AG04450 (cell line): ENCODE measurements at regions of chr16 and their contacts with region 1.

Region 1: DNA sequence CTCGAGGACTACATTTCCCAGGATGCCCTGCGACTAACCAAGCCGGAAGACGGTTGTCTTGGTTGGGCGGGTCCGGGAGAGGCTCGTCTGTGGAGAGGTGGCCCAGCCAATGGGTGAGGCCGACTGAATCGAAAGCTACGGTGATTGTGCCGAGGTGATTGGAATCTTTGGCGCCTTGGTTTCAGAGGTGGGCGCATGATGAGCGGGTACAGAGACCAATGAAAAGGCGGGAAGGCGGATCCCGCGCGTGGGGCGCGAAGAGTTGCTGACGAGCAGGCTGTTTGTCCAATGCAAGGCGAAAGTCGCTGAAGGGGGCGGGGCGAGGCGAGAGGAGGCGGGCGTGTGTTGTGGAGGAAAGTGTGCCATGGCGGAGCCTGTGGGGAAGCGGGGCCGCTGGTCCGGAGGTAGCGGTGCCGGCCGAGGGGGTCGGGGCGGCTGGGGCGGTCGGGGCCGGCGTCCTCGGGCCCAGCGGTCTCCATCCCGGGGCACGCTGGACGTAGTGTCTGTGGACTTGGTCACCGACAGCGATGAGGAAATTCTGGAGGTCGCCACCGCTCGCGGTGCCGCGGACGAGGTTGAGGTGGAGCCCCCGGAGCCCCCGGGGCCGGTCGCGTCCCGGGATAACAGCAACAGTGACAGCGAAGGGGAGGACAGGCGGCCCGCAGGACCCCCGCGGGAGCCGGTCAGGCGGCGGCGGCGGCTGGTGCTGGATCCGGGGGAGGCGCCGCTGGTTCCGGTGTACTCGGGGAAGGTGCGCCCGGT is at the start of gene NFATC2IP:
- DNase-seq: peak; percentile 99
- H3K4me3 ChIP-seq: peak within 1 kb of the TSS; percentile 78
- H3K27ac ChIP-seq: peak within 1 kb of the TSS; percentile 21
- H3K27me3 ChIP-seq: no peaks in the 10 kb centered on the region
- CTCF ChIP-seq: no peak
- polyA plus RNA-seq, gene NFATC2IP: 20.7 and 22.3 TPM in 2 replicates

Region 2: DNA sequence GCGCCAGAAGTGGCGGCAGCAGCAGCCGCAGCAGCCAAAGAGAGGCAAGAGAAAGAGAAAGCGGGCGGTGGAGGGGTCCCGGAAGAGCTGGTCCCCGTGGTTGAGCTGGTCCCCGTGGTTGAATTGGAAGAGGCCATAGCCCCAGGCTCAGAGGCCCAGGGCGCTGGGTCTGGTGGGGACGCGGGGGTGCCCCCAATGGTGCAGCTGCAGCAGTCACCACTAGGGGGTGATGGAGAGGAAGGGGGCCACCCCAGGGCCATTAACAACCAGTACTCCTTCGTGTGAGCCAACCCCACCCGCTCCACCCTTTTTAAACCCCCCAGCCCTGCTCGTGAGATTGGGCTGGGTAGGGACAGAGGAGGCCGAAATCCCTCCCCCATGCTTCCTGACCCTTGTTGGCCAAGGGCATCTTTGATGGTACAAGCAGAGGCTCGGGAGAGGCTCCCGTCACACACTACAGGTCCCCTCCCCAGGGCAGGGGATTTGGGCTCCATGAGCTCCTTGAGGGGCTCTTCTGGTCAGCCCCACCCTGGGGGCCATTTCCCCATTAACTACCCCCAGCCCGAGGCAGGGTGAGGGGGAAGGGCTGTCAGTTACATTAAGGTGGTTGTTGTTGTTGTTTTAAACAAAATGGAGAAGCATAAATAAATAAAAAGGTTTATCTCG is 77.2 kb before region 1 on chr16:
- CTCF ChIA-PET with region 1: interaction called, 19 read pairs
- POLR2A ChIA-PET with region 1: no interaction called
- DNase-seq: no peak
- H3K4me3 ChIP-seq: no peak overlapping the region
- H3K27ac ChIP-seq: no peak overlapping the region
- H3K27me3 ChIP-seq: no peaks in the 10 kb centered on the region
- CTCF ChIP-seq: peak; percentile 59

Region 3: DNA sequence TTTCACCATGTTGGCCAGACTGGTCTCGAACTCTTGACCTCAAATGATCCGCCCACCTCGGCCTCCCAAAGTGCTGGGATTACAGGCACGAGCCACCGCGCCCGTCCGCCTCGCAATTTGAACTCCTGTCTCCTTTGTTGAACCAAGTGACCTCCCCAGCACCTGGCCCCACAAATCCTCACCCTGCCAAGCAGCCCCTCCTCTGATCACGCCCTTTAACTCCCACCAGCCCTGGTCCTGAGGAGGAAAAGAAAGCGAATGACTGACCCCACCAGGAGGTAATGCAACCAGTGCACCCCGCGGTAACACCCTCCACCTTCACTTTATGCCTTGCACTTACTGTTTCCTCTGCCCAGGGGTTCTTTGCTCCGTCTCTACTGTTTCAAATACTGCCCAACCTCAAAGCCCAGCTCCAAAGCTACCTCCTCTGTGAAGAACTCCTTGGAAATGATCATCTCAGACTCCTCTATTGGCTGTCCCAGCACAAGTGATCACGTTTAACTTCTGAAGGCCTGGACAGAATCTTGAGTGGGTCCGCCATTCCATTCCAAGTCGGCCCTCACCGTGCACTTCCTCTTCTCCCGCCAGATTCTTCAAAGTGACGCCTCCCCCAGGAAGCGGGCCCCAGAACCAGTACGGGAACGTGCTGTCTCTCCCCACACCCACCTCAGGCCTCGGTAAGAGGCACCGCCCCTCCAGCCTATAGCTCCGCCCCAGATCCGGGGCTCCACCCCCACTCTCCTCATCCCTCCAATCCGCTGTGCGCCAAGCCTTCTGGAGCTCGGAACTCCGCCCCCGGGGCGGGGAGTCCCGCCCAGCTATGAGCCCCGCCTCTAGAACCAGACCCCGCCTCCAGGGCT is 14.7 kb before region 1 on chr16:
- CTCF ChIA-PET with region 1: interaction called, 14 read pairs
- POLR2A ChIA-PET with region 1: no interaction called
- DNase-seq: no peak
- H3K4me3 ChIP-seq: no peak overlapping the region
- H3K27ac ChIP-seq: no peak overlapping the region
- H3K27me3 ChIP-seq: no peaks in the 10 kb centered on the region
- CTCF ChIP-seq: no peak

Region 4: GRCh38 chr16:29315615-29316517 is 365.0 kb after region 1 on chr16:
- CTCF ChIA-PET with region 1: no interaction called
- POLR2A ChIA-PET with region 1: no interaction called
- DNase-seq: no peak
- H3K4me3 ChIP-seq: no peak overlapping the region
- H3K27ac ChIP-seq: no peak overlapping the region
- H3K27me3 ChIP-seq: no peaks in the 10 kb centered on the region
- CTCF ChIP-seq: no peak